ENCODE measurements at regions of chr18 and their contacts with region 1.

Region 1: GRCh38 chr18:35497370-35498197 is at the start of gene INO80C:
- DNase-seq: peak; percentile 80 to 97 (median 92)
- ATAC-seq: peak; percentile 92
- H3K4me3 ChIP-seq: peak within 1 kb of the TSS; percentile 83 to 86
- H3K4me3 Mint-ChIP-seq: peak within 1 kb of the TSS; percentile 93
- H3K27ac ChIP-seq: peak within 1 kb of the TSS; percentile 95 to 97
- H3K27ac Mint-ChIP-seq: peak within 1 kb of the TSS; percentile 98
- H3K4me1 ChIP-seq: peaks cover 17% of the 10 kb centered on the region
- H3K4me1 Mint-ChIP-seq: peaks cover 32% of the 10 kb centered on the region
- H3K27me3 ChIP-seq: no peaks in the 10 kb centered on the region
- H3K27me3 Mint-ChIP-seq: no peaks in the 10 kb centered on the region
- CTCF ChIP-seq: no peak
- total RNA-seq, gene INO80C: 20.1 to 22.1 TPM

Region 2: DNA sequence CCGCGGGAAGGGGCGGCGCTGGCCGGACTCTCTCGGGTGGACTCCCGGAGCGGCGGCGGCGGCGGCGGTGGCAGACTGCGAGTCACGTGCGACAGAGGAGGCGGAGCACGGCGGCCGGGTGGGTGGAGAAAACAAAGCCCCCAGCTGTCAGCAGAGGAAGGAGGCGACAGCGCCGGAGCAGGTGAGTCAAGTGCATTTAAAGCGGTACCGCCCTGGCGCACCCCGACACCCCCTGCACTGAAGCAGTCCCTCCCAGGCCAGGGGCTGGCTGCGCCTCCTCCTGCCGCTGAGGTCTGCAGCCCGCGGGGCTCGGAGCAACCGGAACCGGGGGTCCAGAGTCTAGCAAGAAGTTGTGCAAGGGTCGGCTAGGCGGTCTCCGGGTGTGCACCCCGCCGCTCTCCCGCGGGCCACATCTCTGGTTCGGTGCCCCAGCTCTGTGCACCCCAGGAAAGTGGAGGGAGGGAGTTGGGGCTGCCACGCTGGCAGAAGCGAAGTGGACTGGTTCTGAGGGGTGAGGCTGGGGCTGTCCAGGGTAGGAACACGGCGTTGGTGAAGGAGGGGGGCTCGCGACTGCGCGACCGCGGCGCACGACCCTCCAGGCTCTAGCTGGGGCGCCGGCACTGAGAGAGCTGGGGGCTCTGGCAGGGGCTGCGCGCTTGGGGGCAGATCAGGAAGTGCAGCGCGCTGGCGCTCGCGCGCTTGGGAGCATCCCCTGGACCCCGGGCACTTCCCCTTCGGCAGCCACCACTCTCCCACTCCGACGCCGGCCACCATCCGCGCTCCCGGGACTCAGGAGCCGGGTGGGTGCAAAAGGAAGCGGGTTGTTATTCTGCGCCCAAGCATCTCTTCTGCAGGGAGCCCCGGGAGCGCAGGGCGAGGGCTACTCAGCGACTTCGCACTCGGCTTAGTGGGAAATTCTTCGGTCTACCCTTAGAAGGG is 520.4 kb before region 1 on chr18:
- CTCF ChIA-PET with region 1: no interaction called
- POLR2A ChIA-PET with region 1: no interaction called
- intact Hi-C with region 1: loop called (anchors 1 to 2 kb)
- DNase-seq: peak; percentile 55 to 89 (median 85)
- ATAC-seq: peak; percentile 81
- H3K4me3 ChIP-seq: peak overlapping the region; percentile 87 to 93
- H3K4me3 Mint-ChIP-seq: peak overlapping the region; percentile 96
- H3K27ac ChIP-seq: peak overlapping the region in 1 of 2 experiments; percentile 35
- H3K27ac Mint-ChIP-seq: peak overlapping the region; percentile 70
- H3K4me1 ChIP-seq: peaks cover 11% of the 10 kb centered on the region
- H3K4me1 Mint-ChIP-seq: peaks cover 26% of the 10 kb centered on the region
- H3K27me3 ChIP-seq: no peaks in the 10 kb centered on the region
- H3K27me3 Mint-ChIP-seq: no peaks in the 10 kb centered on the region
- CTCF ChIP-seq: no peak

Region 3: DNA sequence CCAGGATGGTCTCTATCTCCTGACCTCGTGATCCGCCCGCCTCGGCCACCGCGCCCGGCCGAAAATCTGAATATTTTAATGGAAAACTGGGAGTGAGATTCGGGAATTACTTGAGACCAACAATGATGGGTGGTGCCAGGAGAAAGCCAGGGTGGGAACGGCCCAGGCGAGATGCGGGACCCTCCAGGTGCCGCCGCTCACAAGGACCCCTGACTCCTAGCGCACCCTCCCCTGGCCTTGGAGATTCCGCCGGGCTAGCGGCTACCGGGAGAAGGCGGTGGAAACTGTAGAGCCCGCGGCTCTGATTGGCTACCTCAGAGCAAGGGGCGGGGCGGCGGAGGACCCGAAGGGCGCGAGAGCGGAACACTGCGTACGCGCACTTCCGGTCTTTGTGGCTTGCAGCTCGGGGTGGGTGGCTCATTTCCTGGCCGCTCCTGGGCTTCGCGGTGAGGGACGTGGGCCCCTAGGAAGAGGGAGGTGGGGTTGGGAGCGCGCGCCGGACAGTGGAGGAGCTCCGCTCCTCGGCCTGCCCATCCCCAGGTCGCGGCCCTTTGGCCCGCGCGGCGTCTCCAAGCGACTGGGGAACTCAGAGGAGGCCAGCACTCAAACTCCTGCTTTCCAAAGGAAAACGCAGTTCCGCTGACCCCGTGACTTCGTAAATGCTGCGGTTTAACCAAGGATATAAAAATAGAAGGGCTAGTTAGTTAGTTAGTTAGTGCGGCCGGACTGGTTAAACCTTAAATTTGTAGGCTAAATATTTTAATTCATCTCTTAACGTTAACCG is 256.7 kb before region 1 on chr18 and contains the start of gene ZNF397:
- CTCF ChIA-PET with region 1: no interaction called
- POLR2A ChIA-PET with region 1: interaction called, 4 read pairs
- intact Hi-C with region 1: loop called (anchors 1 to 2 kb)
- DNase-seq: peak; percentile 85 to 97 (median 96)
- ATAC-seq: peak; percentile 96
- H3K4me3 ChIP-seq: peak within 1 kb of the TSS; percentile 87 to 96
- H3K4me3 Mint-ChIP-seq: peak within 1 kb of the TSS; percentile 96
- H3K27ac ChIP-seq: peak within 1 kb of the TSS; percentile 94 to 98
- H3K27ac Mint-ChIP-seq: peak within 1 kb of the TSS; percentile 97
- H3K4me1 ChIP-seq: peaks cover 18% of the 10 kb centered on the region
- H3K4me1 Mint-ChIP-seq: peaks cover 39% of the 10 kb centered on the region
- H3K27me3 ChIP-seq: no peaks in the 10 kb centered on the region
- H3K27me3 Mint-ChIP-seq: no peaks in the 10 kb centered on the region
- CTCF ChIP-seq: no peak
- total RNA-seq, gene ZNF397: 6.7 to 6.8 TPM

Region 4: DNA sequence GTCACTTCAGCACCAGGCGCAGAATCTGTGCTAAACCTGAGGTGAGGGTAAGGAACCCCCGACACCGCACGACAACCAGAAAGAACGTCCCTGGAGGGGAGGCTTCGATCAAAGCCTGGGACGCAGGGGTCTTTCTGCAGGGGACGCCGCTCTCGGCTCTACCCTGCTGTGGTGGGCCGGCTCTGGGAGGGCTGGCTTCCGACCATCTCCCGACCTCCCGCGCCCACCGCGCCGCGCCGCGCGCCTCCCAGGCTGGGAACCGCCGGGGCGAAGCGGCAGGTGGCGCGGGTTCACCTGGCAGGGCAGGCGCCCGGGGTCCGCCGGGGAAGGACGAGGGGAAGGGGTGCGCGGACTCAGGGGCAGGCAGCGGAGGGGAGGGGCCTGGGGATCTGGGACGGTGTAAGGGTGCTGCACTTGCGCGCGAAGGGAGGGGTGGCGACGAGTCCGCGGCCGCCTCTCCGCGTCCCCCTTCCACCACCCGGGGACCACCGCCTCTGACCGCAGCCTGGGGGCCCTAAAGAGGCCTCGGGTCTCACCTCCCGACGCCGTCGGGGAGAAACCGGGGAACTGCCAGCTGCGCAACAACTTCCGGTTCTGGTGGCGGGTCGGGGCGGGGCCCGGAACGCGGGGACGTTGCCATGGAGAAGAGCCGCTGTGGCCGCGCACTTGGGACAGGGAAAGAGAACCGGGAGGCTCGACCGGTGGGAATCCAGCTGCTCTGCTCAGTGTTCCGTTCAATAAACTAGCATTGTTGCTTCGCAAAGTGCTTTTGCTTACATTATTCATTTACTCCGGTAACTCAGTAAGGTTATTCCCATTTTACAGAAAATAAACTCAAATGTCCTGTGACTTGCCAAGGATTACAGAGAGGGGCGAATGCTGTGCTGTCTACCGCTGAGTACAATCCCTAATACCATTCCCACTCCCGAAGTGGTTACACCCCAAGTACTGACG is 120.6 kb before region 1 on chr18 and contains the start of gene ZNF396:
- CTCF ChIA-PET with region 1: no interaction called
- POLR2A ChIA-PET with region 1: no interaction called
- intact Hi-C with region 1: loop called in 1 of 2 experiments (anchors 1 kb)
- DNase-seq: peak; percentile 31 to 84 (median 63)
- ATAC-seq: peak; percentile 74
- H3K4me3 ChIP-seq: peak within 1 kb of the TSS; percentile 74 to 75
- H3K4me3 Mint-ChIP-seq: peak within 1 kb of the TSS; percentile 83
- H3K27ac ChIP-seq: peak within 1 kb of the TSS; percentile 12 to 31
- H3K27ac Mint-ChIP-seq: peak within 1 kb of the TSS; percentile 11
- H3K4me1 ChIP-seq: peaks cover 4% of the 10 kb centered on the region
- H3K4me1 Mint-ChIP-seq: peaks cover 9% of the 10 kb centered on the region
- H3K27me3 ChIP-seq: no peaks in the 10 kb centered on the region
- H3K27me3 Mint-ChIP-seq: no peaks in the 10 kb centered on the region
- CTCF ChIP-seq: no peak
- total RNA-seq, gene ZNF396: not detected

Region 5: GRCh38 chr18:35616664-35617423 is 119.3 kb after region 1 on chr18:
- CTCF ChIA-PET with region 1: no interaction called
- POLR2A ChIA-PET with region 1: no interaction called
- intact Hi-C with region 1: loop called (anchors 1 to 5 kb)
- DNase-seq: peak; percentile 10 to 82 (median 62)
- ATAC-seq: peak; percentile 92
- H3K4me3 ChIP-seq: peak overlapping the region in 1 of 2 experiments; percentile 10
- H3K4me3 Mint-ChIP-seq: no peak overlapping the region
- H3K27ac ChIP-seq: peak overlapping the region; percentile 27 to 76
- H3K27ac Mint-ChIP-seq: no peak overlapping the region
- H3K4me1 ChIP-seq: peaks cover 19% of the 10 kb centered on the region
- H3K4me1 Mint-ChIP-seq: peaks cover 20% of the 10 kb centered on the region
- H3K27me3 ChIP-seq: no peaks in the 10 kb centered on the region
- H3K27me3 Mint-ChIP-seq: no peaks in the 10 kb centered on the region
- CTCF ChIP-seq: no peak

Region 6: GRCh38 chr18:36129300-36130038 is 631.9 kb after region 1 on chr18 and contains the starts of genes ELP2 and SLC39A6:
- CTCF ChIA-PET with region 1: no interaction called
- POLR2A ChIA-PET with region 1: interaction called, 3 read pairs
- intact Hi-C with region 1: loop called in 1 of 2 experiments (anchors 1 kb)
- DNase-seq: peak; percentile 88 to 98 (median 96)
- ATAC-seq: peak; percentile 87
- H3K4me3 ChIP-seq: peak within 1 kb of the TSS; percentile 97 to 100
- H3K4me3 Mint-ChIP-seq: peak within 1 kb of the TSS; percentile 95
- H3K27ac ChIP-seq: peak within 1 kb of the TSS; percentile 94 to 98
- H3K27ac Mint-ChIP-seq: peak within 1 kb of the TSS; percentile 98
- H3K4me1 ChIP-seq: peaks cover 47% of the 10 kb centered on the region
- H3K4me1 Mint-ChIP-seq: peaks cover 68% of the 10 kb centered on the region
- H3K27me3 ChIP-seq: no peaks in the 10 kb centered on the region
- H3K27me3 Mint-ChIP-seq: no peaks in the 10 kb centered on the region
- CTCF ChIP-seq: no peak
- total RNA-seq, gene ELP2: 212 to 222 TPM
- total RNA-seq, gene SLC39A6: 12.3 to 14.4 TPM